Naive thymus-derived CD4-positive, alpha-beta T cell (primary cell): ENCODE measurements at regions of chr15 and their contacts with region 1.

Region 1: DNA sequence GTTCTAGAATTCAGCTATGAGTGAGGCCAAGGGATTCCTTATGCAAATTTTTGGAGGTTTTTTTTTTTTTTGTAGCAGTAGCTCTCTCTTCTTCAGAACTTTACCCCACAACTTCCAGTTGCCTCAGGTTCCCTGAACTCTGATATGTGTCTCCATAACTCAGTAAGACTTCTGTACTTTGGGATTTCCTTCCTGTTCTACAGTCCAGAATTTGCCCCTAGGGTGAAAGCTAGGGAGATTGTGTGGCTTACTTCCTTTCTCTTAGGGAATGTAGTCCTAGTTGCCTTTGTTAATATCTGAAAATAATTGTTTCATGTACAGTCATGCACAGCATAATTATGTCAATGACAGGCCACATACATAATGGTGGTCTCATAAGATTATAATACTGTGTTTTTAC is 30.8 kb downstream of the LRRC28 start:
- DNase-seq: no peak
- ATAC-seq: no peak
- H3K4me3 ChIP-seq: no peak overlapping the region
- H3K4me3 Mint-ChIP-seq: no peak overlapping the region
- H3K27ac ChIP-seq: no peak overlapping the region
- H3K27ac Mint-ChIP-seq: no peak overlapping the region
- H3K4me1 ChIP-seq: no peaks in the 10 kb centered on the region
- H3K4me1 Mint-ChIP-seq: peaks cover 9 to 47% (median 19%) of the 10 kb centered on the region in 7 donors
- H3K27me3 ChIP-seq: no peaks in the 10 kb centered on the region
- H3K27me3 Mint-ChIP-seq: no peaks in the 10 kb centered on the region

Region 2: GRCh38 chr15:99507504-99508310 is 225.6 kb after region 1 on chr15:
- CTCF ChIA-PET with region 1: no interaction called
- POLR2A ChIA-PET with region 1: no interaction called
- intact Hi-C with region 1: loop called in 1 of 2 experiments (anchors 10 kb)
- DNase-seq: no peak
- ATAC-seq: peak; percentile 38
- H3K4me3 ChIP-seq: no peak overlapping the region
- H3K4me3 Mint-ChIP-seq: peak overlapping the region in 1 of 10 donors; percentile 29
- H3K27ac ChIP-seq: no peak overlapping the region
- H3K27ac Mint-ChIP-seq: peak overlapping the region in 2 of 9 donors; percentile 12 to 29
- H3K4me1 ChIP-seq: no peaks in the 10 kb centered on the region
- H3K4me1 Mint-ChIP-seq: peaks cover 13 to 48% (median 29%) of the 10 kb centered on the region in 7 donors
- H3K27me3 ChIP-seq: no peaks in the 10 kb centered on the region
- H3K27me3 Mint-ChIP-seq: peaks cover 0 to 4% (median 0%) of the 10 kb centered on the region in 5 donors

Region 3: DNA sequence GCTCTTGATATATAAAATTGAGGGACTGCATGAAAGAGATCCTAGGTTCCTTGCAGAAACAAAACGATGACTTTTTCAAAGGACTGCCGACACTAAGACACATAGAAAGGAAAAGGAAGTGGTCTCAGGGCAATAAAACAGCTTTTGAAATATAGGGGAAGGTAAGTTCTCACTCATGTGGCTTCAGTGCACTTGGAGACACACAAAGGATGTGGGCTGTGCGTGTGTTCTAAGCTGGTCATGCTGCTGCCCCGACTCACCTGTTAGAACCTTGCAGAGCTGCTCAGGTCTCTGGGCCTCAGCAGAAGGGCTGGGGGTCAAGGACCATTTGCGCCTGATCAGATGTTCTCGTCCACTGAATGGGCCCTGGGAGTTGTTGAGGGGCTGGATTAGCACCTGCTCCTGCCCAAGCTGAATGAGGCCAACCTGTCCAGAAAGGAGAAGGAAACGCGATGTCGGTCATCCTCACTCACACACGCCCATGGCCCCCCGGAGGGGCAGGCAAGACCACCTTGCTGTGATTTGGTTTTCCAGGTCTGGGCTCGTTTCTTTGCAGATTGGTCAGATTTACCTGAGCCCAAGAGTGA is 1048.6 kb after region 1 on chr15:
- CTCF ChIA-PET with region 1: no interaction called
- POLR2A ChIA-PET with region 1: no interaction called
- intact Hi-C with region 1: no loop called
- DNase-seq: peak in 7 of 9 donors; percentile 22 to 84 (median 79)
- ATAC-seq: peak; percentile 89
- H3K4me3 ChIP-seq: peak overlapping the region; percentile 43
- H3K4me3 Mint-ChIP-seq: peak overlapping the region; percentile 45 to 89 (median 78)
- H3K27ac ChIP-seq: peak overlapping the region; percentile 24
- H3K27ac Mint-ChIP-seq: peak overlapping the region; percentile 11 to 77 (median 70)
- H3K4me1 ChIP-seq: peaks cover 58 to 66% of the 10 kb centered on the region in 2 donors
- H3K4me1 Mint-ChIP-seq: peaks cover 41 to 87% (median 74%) of the 10 kb centered on the region in 7 donors
- H3K27me3 ChIP-seq: no peaks in the 10 kb centered on the region
- H3K27me3 Mint-ChIP-seq: peaks cover 0 to 10% (median 0%) of the 10 kb centered on the region in 5 donors